Transverse colon (tissue), 4 donors: ENCODE measurements at regions of chr9 and their contacts with region 1.

Region 1: GRCh38 chr9:124776954-124777665 is at the start of gene OLFML2A:
- DNase-seq: peak; percentile 26
- H3K4me3 ChIP-seq: peak within 1 kb of the TSS; percentile 55 to 66 (median 60)
- H3K27ac ChIP-seq: peak within 1 kb of the TSS; percentile 43 to 85 (median 80)
- H3K4me1 ChIP-seq: peaks cover 3 to 39% (median 21%) of the 10 kb centered on the region in 4 donors
- H3K27me3 ChIP-seq: peaks cover 26% of the 10 kb centered on the region
- CTCF ChIP-seq: peak in 3 of 5 experiments; percentile 24 to 31 (median 30)
- EP300 ChIP-seq: no peak
- POLR2A ChIP-seq: no peak
- total RNA-seq, gene OLFML2A: 9.4 to 59.1 (median 16.0) TPM

Region 2: DNA sequence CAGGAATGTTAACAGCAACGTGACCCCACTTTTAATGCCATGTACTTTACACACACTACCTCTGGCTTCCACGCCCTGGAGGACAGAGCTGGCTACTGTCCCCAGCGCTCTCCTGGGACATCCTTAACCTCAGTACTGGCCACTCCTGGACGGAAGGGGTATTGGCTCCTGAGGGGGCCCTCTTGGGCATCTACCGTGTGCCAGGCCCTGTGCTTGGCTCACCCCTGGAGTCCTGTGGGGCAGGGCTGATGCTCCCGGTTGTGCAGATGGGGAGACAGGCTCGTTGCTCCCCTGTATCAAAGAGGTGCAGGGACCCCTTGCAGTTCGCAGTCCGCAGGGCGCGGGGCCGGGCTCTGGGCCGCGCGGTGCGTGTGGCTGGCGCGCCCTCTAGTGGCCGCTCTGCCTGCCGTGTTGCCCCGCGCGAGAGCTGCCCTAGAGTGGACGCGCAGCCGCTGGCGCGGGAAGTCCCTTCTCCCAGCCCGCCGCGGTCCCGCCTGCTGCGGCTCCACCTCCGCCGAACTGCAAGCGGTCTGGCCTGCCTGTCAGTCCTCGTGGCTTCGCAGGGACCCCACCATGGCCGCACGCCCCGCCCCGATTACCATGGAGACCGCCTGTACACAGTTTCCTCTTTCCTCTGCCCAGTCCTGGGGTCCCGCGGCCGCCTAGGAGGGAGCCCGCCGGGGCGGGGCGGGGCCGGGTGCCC is 75.9 kb after region 1 on chr9 and contains the start of gene WDR38:
- in situ Hi-C with region 1: loop called (anchors 5 kb)
- intact Hi-C with region 1: loop called (anchors 1 kb)
- DNase-seq: peak; percentile 76
- H3K4me3 ChIP-seq: peak within 1 kb of the TSS; percentile 9 to 56 (median 36)
- H3K27ac ChIP-seq: peak within 1 kb of the TSS; percentile 11 to 63 (median 54)
- H3K4me1 ChIP-seq: peaks cover 6 to 24% (median 13%) of the 10 kb centered on the region in 4 donors
- H3K27me3 ChIP-seq: no peaks in the 10 kb centered on the region
- CTCF ChIP-seq: peak; percentile 99 to 100 (median 99)
- EP300 ChIP-seq: no peak
- POLR2A ChIP-seq: no peak
- total RNA-seq, gene WDR38: not detected